PC-9 (cell line): ENCODE measurements at regions of chr3 and their contacts with region 1.

Region 1: DNA sequence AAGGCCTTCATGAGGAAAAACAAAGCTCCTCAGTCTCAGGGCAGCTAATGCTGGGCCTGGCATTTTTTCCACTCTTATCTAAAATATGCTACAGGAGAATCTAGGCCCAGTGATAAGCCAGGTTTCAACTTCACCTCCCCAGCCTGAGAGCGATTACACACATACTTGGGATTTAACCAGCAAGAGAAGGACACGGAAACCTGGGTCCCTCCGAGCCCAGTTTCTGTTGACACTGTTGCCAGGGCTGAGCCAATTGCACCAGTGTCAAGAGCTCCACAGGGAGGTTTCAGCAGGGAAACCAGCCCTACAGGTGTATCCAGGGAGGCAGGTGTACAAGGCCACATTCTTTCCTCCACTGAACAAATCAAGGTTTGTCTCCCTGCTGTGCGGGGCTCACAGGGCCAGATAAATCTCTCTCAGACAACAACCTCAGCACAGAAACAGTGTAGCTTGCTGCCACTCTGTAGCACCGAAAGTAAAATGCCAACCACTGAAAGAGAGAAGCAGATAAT is 85.4 kb downstream of the MAGI1 start:
- DNase-seq: peak; percentile 93 to 98
- H3K4me3 ChIP-seq: peak overlapping the region; percentile 31
- H3K27ac ChIP-seq: peak overlapping the region; percentile 100
- H3K4me1 ChIP-seq: peaks cover 65% of the 10 kb centered on the region
- H3K27me3 ChIP-seq: no peaks in the 10 kb centered on the region
- CTCF ChIP-seq: no peak

Region 2: GRCh38 chr3:65030847-65031558 is 922.4 kb before region 1 on chr3:
- CTCF ChIA-PET with region 1: no interaction called
- POLR2A ChIA-PET with region 1: no interaction called
- intact Hi-C with region 1: no loop called
- DNase-seq: peak; percentile 24 to 85
- H3K4me3 ChIP-seq: no peak overlapping the region
- H3K27ac ChIP-seq: no peak overlapping the region
- H3K4me1 ChIP-seq: peaks cover 15% of the 10 kb centered on the region; the same call in 1 of the 2 replicates
- H3K27me3 ChIP-seq: no peaks in the 10 kb centered on the region
- CTCF ChIP-seq: no peak

Region 3: GRCh38 chr3:65607101-65607500 is 346.3 kb before region 1 on chr3:
- CTCF ChIA-PET with region 1: no interaction called
- POLR2A ChIA-PET with region 1: no interaction called
- intact Hi-C with region 1: no loop called
- DNase-seq: peak in 1 of 2 experiments; percentile 51
- H3K4me3 ChIP-seq: no peak overlapping the region
- H3K27ac ChIP-seq: no peak overlapping the region
- H3K4me1 ChIP-seq: peaks cover 20% of the 10 kb centered on the region
- H3K27me3 ChIP-seq: no peaks in the 10 kb centered on the region
- CTCF ChIP-seq: no peak

Region 4: DNA sequence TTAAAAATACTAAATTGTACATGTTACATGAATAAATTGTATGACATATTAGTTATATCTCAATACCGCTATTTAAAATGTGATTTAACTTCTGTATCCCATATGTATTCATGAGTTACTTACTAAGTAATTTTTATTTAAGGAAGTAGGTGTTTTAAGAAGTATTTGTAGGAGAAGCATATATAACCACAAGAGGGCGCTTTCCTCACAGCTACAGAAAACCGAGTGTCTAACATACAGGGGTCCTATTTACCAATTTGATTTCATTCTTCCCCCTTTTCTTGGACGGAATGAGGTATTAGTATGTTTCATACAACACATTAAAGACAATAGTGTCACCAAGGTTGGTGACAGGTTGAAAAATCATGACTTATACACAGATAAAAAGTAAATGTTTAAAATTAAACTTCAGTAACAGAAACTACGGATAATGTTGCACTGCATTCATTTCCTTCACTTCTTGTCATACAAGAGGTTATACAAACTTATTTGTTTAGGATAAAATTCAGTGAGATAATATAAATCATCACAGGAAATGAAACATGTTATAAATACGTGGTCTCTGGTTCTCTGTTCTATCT is 168.2 kb before region 1 on chr3:
- CTCF ChIA-PET with region 1: no interaction called
- POLR2A ChIA-PET with region 1: no interaction called
- intact Hi-C with region 1: loop called (anchors 2 kb)
- DNase-seq: peak in 1 of 2 experiments; percentile 39
- H3K4me3 ChIP-seq: no peak overlapping the region
- H3K27ac ChIP-seq: no peak overlapping the region
- H3K4me1 ChIP-seq: no peaks in the 10 kb centered on the region
- H3K27me3 ChIP-seq: no peaks in the 10 kb centered on the region
- CTCF ChIP-seq: peak; percentile 79

Region 5: GRCh38 chr3:65963787-65964677 is 10.7 kb after region 1 on chr3:
- CTCF ChIA-PET with region 1: no interaction called
- POLR2A ChIA-PET with region 1: no interaction called
- intact Hi-C with region 1: loop called (anchors 1 kb)
- DNase-seq: peak; percentile 31 to 94
- H3K4me3 ChIP-seq: no peak overlapping the region; the same call in 1 of the 2 replicates
- H3K27ac ChIP-seq: peak overlapping the region; percentile 97
- H3K4me1 ChIP-seq: peaks cover 33% of the 10 kb centered on the region
- H3K27me3 ChIP-seq: no peaks in the 10 kb centered on the region
- CTCF ChIP-seq: no peak

Region 6: DNA sequence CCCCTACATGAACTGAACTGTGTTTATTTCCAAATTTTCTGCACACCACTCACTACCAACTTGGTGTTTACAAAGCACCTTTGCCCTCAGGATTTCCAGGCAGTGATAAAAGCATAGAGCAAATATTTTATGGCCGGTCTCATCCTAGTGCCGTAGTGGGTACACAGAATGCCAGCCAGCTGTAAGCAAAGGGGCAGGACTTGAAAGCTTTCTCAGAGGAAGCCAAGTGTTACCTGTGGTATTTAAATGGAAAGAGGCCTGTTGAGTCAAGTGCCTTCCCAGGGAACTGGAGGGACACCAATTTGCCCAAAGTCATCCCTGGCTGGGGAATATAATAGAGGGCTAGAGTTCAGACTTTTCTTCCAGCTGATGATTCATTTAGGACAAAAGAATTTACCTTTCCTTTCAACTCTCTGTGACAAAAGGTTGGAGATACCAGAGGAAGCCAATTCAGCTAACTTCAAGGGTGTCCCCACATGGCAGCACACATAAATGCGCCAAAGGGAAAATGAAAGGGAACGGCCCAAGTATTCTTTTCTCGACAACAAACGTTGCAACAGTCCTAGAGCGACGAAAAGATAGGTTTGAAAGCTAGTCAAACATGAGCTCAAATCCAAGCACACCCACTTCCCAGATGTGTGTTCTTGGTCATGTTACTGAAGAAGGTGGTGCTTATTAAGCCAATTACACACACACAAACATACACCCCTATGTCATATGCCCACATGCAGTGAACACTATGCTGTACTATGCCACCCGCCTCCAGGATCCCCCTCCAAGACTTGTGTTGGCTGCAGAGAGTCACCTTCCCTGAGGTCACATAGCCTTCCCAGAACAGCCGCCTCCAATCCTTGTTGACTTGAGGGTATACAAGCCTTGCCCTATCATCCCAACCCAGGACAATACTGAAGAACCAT is 57.6 kb after region 1 on chr3:
- CTCF ChIA-PET with region 1: no interaction called
- POLR2A ChIA-PET with region 1: no interaction called
- intact Hi-C with region 1: loop called (anchors 5 kb)
- DNase-seq: peak; percentile 23 to 62
- H3K4me3 ChIP-seq: no peak overlapping the region
- H3K27ac ChIP-seq: peak overlapping the region; percentile 49
- H3K4me1 ChIP-seq: peaks cover 16% of the 10 kb centered on the region
- H3K27me3 ChIP-seq: no peaks in the 10 kb centered on the region
- CTCF ChIP-seq: no peak

Region 7: DNA sequence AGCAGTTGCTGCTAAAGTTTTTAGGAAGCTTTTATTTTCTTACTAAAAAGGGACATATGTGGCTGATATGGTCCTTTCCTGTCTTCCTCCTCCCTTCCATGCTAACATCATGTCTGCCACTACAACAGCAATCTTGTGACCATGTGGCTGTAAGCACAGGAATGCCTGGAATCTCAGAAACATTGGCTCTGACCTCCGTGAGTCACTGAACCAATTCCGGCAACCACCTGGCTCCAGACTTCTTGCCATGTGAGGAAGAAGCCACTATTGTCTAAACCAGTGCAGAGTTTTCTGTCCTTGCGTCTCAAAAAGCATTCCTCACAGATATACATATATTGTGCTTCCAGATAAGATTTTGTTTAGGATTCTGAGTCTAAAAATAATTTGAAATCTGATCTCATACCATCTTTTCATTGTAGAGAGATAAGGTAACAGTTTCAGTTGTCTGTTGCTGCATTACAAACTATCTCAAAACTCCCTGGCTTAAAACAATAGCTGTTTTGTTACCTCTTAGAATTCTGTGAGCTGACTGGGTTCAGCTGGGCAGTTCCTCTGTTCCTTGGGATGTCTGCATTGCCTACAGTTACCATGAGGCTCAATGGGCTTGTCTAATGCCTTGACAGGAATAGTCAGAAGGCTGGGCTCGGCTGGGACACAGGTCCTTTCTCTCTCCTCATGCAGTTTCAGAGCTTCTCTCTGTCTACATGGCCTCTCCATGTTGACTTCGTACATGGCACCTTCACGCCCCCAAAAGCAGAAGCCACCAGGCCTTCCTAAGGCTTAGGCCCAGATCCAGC is 162.7 kb after region 1 on chr3:
- CTCF ChIA-PET with region 1: no interaction called
- POLR2A ChIA-PET with region 1: no interaction called
- intact Hi-C with region 1: loop called (anchors 2 kb)
- DNase-seq: peak; percentile 76 to 93
- H3K4me3 ChIP-seq: no peak overlapping the region
- H3K27ac ChIP-seq: peak overlapping the region; percentile 72
- H3K4me1 ChIP-seq: peaks cover 21% of the 10 kb centered on the region
- H3K27me3 ChIP-seq: no peaks in the 10 kb centered on the region
- CTCF ChIP-seq: no peak